ENCODE measurements at regions of chr1 and their contacts with region 1.

Region 1: GRCh38 chr1:158095737-158096335 is 84.9 kb upstream of the CD1D start:
- DNase-seq: no peak
- H3K4me3 ChIP-seq: no peak overlapping the region
- H3K27ac ChIP-seq: no peak overlapping the region
- H3K27me3 ChIP-seq: no peaks in the 10 kb centered on the region
- CTCF ChIP-seq: peak; percentile 75

Region 2: GRCh38 chr1:157963713-157964112 is 132.1 kb before region 1 on chr1:
- CTCF ChIA-PET with region 1: interaction called, 34 read pairs
- POLR2A ChIA-PET with region 1: no interaction called
- DNase-seq: peak; percentile 51
- H3K4me3 ChIP-seq: no peak overlapping the region
- H3K27ac ChIP-seq: no peak overlapping the region
- H3K27me3 ChIP-seq: peaks cover 16% of the 10 kb centered on the region
- CTCF ChIP-seq: peak; percentile 92

Region 3: DNA sequence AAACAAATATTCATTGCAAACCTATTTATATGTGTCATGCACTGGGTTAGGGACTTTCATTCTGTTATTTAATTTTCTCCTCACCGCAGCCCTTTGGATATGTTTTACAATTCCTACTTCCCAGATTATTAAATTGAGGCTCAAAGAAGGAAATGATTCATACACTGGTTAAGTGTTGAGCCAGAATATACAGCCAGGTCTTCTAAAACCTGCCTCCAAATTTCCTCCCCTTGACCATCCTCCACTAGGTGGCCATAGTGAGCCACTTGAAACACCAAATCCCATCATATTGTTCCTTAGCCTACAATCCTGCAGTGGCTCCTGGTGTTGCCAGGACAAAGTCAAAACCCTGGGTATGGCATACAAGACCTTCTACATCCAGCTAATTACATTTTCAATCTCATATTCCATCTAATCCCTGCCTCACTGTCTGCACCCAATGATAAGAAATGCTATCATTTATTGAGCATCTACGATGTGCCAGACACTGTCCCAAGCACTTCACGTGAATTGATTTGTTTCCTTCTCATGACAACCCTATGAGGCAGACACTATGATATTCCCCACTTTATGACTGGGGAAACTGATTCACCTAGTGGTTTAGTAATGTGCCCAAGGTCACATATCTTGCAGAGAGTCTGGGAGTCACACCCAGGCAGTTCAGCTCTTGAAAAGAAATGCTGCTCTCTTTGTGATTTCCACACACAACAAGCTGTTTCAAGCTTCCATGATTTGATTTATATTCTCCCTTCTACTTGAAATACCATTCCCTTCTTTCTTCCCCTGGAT is 125.9 kb before region 1 on chr1:
- CTCF ChIA-PET with region 1: interaction called, 34 read pairs
- POLR2A ChIA-PET with region 1: no interaction called
- DNase-seq: peak; percentile 65
- H3K4me3 ChIP-seq: no peak overlapping the region
- H3K27ac ChIP-seq: peak overlapping the region; percentile 94
- H3K27me3 ChIP-seq: peaks cover 3% of the 10 kb centered on the region
- CTCF ChIP-seq: peak; percentile 98

Region 4: GRCh38 chr1:157984469-157984868 is 111.4 kb before region 1 on chr1:
- CTCF ChIA-PET with region 1: interaction called, 105 read pairs
- POLR2A ChIA-PET with region 1: no interaction called
- DNase-seq: no peak
- H3K4me3 ChIP-seq: no peak overlapping the region
- H3K27ac ChIP-seq: no peak overlapping the region
- H3K27me3 ChIP-seq: peaks cover 58% of the 10 kb centered on the region
- CTCF ChIP-seq: no peak

Region 5: GRCh38 chr1:158071138-158071537 is 24.7 kb before region 1 on chr1:
- CTCF ChIA-PET with region 1: interaction called, 12 read pairs
- POLR2A ChIA-PET with region 1: no interaction called
- DNase-seq: no peak
- H3K4me3 ChIP-seq: no peak overlapping the region
- H3K27ac ChIP-seq: peak overlapping the region; percentile 21
- H3K27me3 ChIP-seq: no peaks in the 10 kb centered on the region
- CTCF ChIP-seq: no peak

Measured in AG04450 (cell line).